ENCODE measurements at regions of chr7 and their contacts with region 1.

Region 1: GRCh38 chr7:100015232-100016209 is at the start of gene ZKSCAN1:
- DNase-seq: peak; percentile 92
- ATAC-seq: peak; percentile 99
- total RNA-seq, gene ZKSCAN1: 36.7 to 47.0 TPM

Region 2: GRCh38 chr7:100081535-100082102 is 66.1 kb after region 1 on chr7 and contains the start of gene ZNF3:
- intact Hi-C with region 1: loop called in 1 of 2 experiments (anchors 5 kb)
- DNase-seq: peak; percentile 98
- ATAC-seq: peak; percentile 96 to 98
- total RNA-seq, gene ZNF3: 14.6 to 17.3 TPM